ENCODE measurements at regions of chr10 and their contacts with region 1.

Region 1: DNA sequence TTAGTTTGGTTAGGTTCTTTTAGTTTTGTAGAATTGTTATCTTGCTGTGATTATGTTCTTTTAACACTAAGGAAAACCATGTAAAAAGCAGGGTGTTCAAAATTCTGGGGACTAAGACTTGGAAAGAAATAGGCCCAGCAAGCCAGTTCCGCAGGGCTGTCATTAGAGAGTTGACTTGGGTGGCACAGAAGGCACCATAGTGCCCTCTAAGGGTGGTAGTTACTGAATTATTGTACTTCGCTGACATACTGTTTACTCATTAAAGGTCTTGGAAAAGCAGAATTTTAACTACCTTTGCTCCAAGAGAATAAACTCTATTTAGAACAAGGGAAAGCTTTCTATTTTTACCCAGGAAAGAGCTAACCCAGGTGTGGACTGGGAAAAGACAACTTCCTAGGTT is 86.5 kb downstream of the OTUD1 start:
- DNase-seq: peak in 3 of 5 donors; percentile 15 to 30 (median 23)
- ATAC-seq: peak; percentile 73 to 86 (median 82)
- H3K4me3 ChIP-seq: no peak overlapping the region
- H3K27ac ChIP-seq: no peak overlapping the region
- H3K4me1 ChIP-seq: no peaks in the 10 kb centered on the region
- H3K27me3 ChIP-seq: peaks cover 0 to 3% (median 0%) of the 10 kb centered on the region in 9 donors
- CTCF ChIP-seq: peak; percentile 35 to 69 (median 52)
- POLR2A ChIP-seq: no peak

Region 2: GRCh38 chr10:23158370-23158769 is 367.0 kb before region 1 on chr10:
- intact Hi-C with region 1: loop called in 5 of 10 experiments (anchors 5 to 10 kb)
- DNase-seq: no peak
- ATAC-seq: peak in 3 of 4 donors; percentile 70 to 80 (median 74)
- H3K4me3 ChIP-seq: no peak overlapping the region
- H3K27ac ChIP-seq: no peak overlapping the region
- H3K4me1 ChIP-seq: peaks cover 0 to 5% (median 0%) of the 10 kb centered on the region in 12 donors
- H3K27me3 ChIP-seq: peaks cover 0 to 26% (median 5%) of the 10 kb centered on the region in 9 donors
- CTCF ChIP-seq: peak; percentile 62 to 83 (median 74)
- POLR2A ChIP-seq: no peak

Region 3: GRCh38 chr10:23314835-23315239 is 210.6 kb before region 1 on chr10:
- intact Hi-C with region 1: loop called (anchors 1 to 5 kb)
- DNase-seq: peak in 3 of 5 donors; percentile 38 to 51 (median 49)
- ATAC-seq: peak in 3 of 4 donors; percentile 50 to 59 (median 54)
- H3K4me3 ChIP-seq: no peak overlapping the region
- H3K27ac ChIP-seq: no peak overlapping the region
- H3K4me1 ChIP-seq: peaks cover 0 to 6% (median 0%) of the 10 kb centered on the region in 12 donors
- H3K27me3 ChIP-seq: no peaks in the 10 kb centered on the region
- CTCF ChIP-seq: peak; percentile 61 to 85 (median 76)
- POLR2A ChIP-seq: no peak

Region 4: GRCh38 chr10:23438550-23439441 is 86.6 kb before region 1 on chr10 and contains the start of gene OTUD1:
- intact Hi-C with region 1: loop called in 1 of 10 experiments (anchors 5 kb)
- DNase-seq: peak; percentile 97 to 99 (median 97)
- ATAC-seq: peak; percentile 90 to 96 (median 92)
- H3K4me3 ChIP-seq: peak within 1 kb of the TSS; percentile 73 to 95 (median 88)
- H3K27ac ChIP-seq: peak within 1 kb of the TSS; percentile 90 to 99 (median 96)
- H3K4me1 ChIP-seq: peaks cover 4 to 38% (median 24%) of the 10 kb centered on the region in 12 donors
- H3K27me3 ChIP-seq: no peaks in the 10 kb centered on the region
- CTCF ChIP-seq: peak in 6 of 12 donors; percentile 6 to 27 (median 12)
- POLR2A ChIP-seq: peak in 1 of 2 donors; percentile 93
- total RNA-seq, gene OTUD1: 8.7 to 48.3 (median 19.7) TPM

Region 5: DNA sequence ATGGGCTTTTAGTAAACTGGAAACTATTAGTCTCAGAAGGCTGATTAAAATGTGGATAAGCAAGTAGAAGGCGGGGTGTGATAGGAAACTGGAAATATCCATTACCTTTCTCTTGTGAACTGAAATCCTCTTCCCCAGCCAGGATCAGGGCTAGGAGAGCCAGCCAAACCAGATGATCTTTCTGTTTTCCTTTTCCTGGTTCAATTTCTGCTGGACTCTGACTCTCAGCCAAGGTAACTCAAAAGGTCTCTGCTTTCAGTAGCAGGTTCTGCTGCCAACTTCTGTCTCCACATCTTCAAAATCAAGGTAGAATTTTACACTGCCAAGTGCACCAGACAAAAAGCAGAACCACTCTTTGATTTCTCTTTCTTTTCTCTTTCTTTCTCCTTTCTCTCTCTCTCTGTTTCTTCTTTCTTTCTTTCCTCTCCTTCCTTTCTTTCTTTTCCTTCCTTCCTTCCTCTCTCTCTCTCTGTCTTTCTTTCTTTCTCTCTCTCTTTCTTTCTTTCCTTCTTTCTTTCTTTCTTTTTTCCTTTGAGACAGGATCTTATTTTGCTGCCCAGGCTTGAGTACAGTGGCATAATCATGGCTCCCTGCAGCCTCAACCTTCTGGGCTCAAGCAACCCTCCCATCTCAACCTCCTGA is 55.7 kb before region 1 on chr10:
- intact Hi-C with region 1: loop called in 1 of 10 experiments (anchors 2 kb)
- DNase-seq: no peak
- ATAC-seq: no peak
- H3K4me3 ChIP-seq: no peak overlapping the region
- H3K27ac ChIP-seq: no peak overlapping the region
- H3K4me1 ChIP-seq: peaks cover 0 to 11% (median 2%) of the 10 kb centered on the region in 12 donors
- H3K27me3 ChIP-seq: peaks cover 0 to 6% (median 0%) of the 10 kb centered on the region in 9 donors
- CTCF ChIP-seq: no peak
- POLR2A ChIP-seq: no peak

Region 6: DNA sequence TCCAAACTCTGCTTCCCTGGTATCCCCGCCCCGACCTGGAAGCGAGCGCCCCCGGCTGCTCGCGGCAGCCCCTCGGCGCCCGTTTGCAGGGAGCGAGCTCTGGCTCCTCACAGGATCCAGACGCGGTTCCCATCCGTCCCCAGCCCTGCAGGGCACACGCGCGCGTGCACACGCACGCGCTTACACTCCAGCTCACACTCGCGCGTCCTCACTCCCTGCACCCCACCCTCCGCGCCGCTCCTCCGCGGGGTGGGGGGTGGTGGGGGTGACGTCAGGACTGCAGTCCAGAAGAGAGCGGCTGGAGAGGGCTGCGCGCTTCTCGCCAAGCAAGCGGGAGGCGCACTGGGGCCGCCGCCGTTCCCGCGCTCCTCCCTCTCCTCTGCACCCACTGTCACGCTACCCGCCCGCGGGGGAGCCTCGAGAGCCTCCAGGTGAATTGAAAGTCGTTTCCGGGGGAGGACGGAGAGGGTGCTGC is 169.1 kb after region 1 on chr10:
- intact Hi-C with region 1: loop called in 1 of 10 experiments (anchors 10 kb)
- DNase-seq: no peak
- ATAC-seq: no peak
- H3K4me3 ChIP-seq: peak overlapping the region; percentile 17 to 43 (median 37)
- H3K27ac ChIP-seq: no peak overlapping the region
- H3K4me1 ChIP-seq: peaks cover 0 to 22% (median 6%) of the 10 kb centered on the region in 12 donors
- H3K27me3 ChIP-seq: peaks cover 19 to 84% (median 45%) of the 10 kb centered on the region in 9 donors
- CTCF ChIP-seq: no peak
- POLR2A ChIP-seq: no peak

Region 7: GRCh38 chr10:23702977-23703414 is 177.6 kb after region 1 on chr10:
- intact Hi-C with region 1: loop called in 4 of 10 experiments (anchors 5 to 10 kb)
- DNase-seq: peak; percentile 27 to 62 (median 42)
- ATAC-seq: peak in 3 of 4 donors; percentile 58 to 83 (median 81)
- H3K4me3 ChIP-seq: no peak overlapping the region
- H3K27ac ChIP-seq: no peak overlapping the region
- H3K4me1 ChIP-seq: no peaks in the 10 kb centered on the region
- H3K27me3 ChIP-seq: peaks cover 0 to 15% (median 4%) of the 10 kb centered on the region in 9 donors
- CTCF ChIP-seq: peak; percentile 57 to 73 (median 63)
- POLR2A ChIP-seq: no peak

Region 8: DNA sequence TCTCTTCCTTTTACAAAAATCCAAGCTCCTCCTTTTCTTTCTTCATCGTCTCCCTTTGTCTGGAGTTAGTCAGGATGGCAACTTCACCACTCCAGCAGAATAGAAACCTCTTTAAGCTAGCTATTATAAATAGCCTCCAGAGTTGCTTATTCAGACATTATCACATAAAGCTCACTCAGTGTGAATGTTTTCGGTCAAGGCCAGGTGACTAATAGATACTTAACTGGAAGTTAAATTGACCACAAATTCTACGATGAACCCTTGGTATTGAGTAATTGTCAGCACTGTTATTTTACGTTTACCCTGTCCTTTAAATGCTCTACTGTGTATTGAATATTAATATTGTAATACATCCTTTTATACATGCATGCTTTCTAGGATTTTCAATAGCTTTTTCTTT is 253.9 kb after region 1 on chr10:
- intact Hi-C with region 1: no loop called
- DNase-seq: no peak
- ATAC-seq: no peak
- H3K4me3 ChIP-seq: no peak overlapping the region
- H3K27ac ChIP-seq: no peak overlapping the region
- H3K4me1 ChIP-seq: no peaks in the 10 kb centered on the region
- H3K27me3 ChIP-seq: no peaks in the 10 kb centered on the region
- CTCF ChIP-seq: no peak
- POLR2A ChIP-seq: no peak

Measured in heart left ventricle (tissue), 16 donors.